ENCODE measurements at regions of chr17 and their contacts with region 1.

Region 1: DNA sequence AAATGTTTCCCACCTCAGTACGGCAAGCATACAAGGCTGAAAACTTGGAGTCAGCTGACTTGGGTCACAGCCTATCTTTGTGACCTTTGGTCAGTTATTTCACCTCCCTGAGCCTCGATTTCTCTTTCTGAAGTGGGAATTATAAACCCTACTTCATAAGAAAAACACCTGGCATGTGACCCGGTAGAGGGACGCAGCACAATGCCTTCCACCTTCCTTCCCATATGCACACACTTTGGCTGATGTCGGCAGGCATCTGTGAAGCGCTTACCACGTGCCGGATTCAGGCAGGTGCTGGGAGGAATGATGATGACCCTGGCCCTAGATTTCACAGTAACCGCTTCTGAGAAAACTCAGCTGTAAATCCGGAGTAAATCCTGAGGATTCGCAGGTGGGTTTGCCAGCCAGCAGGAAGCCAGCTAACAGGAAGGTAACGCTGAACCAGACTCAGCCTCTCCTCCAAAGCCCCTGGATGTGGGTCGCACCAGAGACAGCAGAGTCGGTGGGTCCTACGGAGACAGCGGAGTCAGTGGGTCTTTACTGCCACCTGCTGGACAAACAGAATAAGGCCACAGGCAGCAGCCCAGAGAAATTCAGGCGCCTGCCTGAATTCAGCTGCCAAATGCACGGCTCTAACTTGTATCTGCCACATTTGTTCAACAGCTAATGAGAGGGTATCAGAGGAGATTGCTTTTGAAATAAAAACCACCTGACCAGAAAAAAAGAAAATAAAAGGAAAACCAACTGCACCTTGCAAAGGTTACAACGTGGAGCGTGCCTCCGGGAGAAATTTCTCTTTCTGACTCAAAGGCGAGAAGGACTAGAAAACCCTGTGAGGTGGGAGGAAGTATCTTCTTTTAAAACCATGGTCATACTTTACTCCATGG is 16.6 kb downstream of the COPRS start:
- DNase-seq: peak; percentile 39 to 84 (median 50)
- ATAC-seq: peak; percentile 92
- H3K4me3 ChIP-seq: no peak overlapping the region
- H3K4me3 Mint-ChIP-seq: no peak overlapping the region
- H3K27ac ChIP-seq: no peak overlapping the region
- H3K27ac Mint-ChIP-seq: no peak overlapping the region
- H3K4me1 ChIP-seq: peaks cover 9% of the 10 kb centered on the region
- H3K4me1 Mint-ChIP-seq: no peaks in the 10 kb centered on the region
- H3K27me3 ChIP-seq: peaks cover 7 to 11% of the 10 kb centered on the region in 2 experiments
- H3K27me3 Mint-ChIP-seq: peaks cover 5% of the 10 kb centered on the region
- CTCF ChIP-seq: peak; percentile 91

Region 2: GRCh38 chr17:31388770-31389661 is 453.4 kb before region 1 on chr17:
- CTCF ChIA-PET with region 1: interaction called, 3 read pairs
- POLR2A ChIA-PET with region 1: no interaction called
- intact Hi-C with region 1: loop called (anchors 1 to 2 kb)
- DNase-seq: peak in 12 of 14 experiments; percentile 13 to 68 (median 42)
- ATAC-seq: peak; percentile 48
- H3K4me3 ChIP-seq: no peak overlapping the region
- H3K4me3 Mint-ChIP-seq: no peak overlapping the region
- H3K27ac ChIP-seq: no peak overlapping the region
- H3K27ac Mint-ChIP-seq: no peak overlapping the region
- H3K4me1 ChIP-seq: peaks cover 16% of the 10 kb centered on the region
- H3K4me1 Mint-ChIP-seq: peaks cover 6% of the 10 kb centered on the region
- H3K27me3 ChIP-seq: peaks cover 25 to 28% of the 10 kb centered on the region in 2 experiments
- H3K27me3 Mint-ChIP-seq: peaks cover 39% of the 10 kb centered on the region
- CTCF ChIP-seq: peak; percentile 65

Region 3: DNA sequence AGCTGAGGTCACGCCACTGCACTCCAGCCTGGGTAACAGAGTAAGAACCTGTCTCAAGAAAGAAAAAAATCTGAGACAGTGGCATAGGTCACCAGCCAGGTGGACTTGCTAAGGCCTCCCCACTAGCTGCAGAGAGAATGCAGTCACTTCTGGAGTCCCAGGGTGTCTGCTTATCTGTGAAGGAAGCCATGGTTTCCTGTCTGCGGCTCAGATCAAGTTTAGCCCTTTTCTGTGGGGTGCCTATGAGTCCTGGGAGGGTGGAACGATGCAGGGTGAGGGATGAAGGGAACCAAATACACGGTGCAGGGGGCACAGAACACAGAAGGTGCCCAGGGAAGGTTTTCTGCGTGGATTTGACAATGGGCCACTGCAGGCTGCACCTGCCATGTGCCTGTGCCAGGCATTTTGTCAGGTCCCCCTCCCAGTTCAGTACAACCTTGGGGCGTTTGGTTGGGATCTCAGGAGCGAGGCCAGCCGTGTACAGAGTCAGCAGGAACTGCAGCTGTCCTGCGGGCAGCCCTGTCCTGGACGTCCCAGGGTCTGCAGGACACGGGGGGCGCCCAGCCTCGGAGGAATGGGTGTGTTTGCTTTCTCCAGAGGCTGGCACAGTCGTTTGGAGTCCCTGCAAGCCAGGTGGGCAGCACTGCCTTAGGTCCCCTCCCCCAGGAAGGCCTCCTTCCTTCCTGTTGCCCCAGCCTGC is 409.2 kb before region 1 on chr17:
- CTCF ChIA-PET with region 1: interaction called, 6 read pairs
- POLR2A ChIA-PET with region 1: no interaction called
- intact Hi-C with region 1: loop called (anchors 1 kb)
- DNase-seq: peak; percentile 19 to 76 (median 34)
- ATAC-seq: peak; percentile 92
- H3K4me3 ChIP-seq: no peak overlapping the region
- H3K4me3 Mint-ChIP-seq: peak overlapping the region; percentile 3
- H3K27ac ChIP-seq: no peak overlapping the region
- H3K27ac Mint-ChIP-seq: peak overlapping the region; percentile 11
- H3K4me1 ChIP-seq: peaks cover 30% of the 10 kb centered on the region
- H3K4me1 Mint-ChIP-seq: peaks cover 13% of the 10 kb centered on the region
- H3K27me3 ChIP-seq: peaks cover 0 to 5% of the 10 kb centered on the region in 2 experiments
- H3K27me3 Mint-ChIP-seq: peaks cover 11% of the 10 kb centered on the region
- CTCF ChIP-seq: no peak

Region 4: DNA sequence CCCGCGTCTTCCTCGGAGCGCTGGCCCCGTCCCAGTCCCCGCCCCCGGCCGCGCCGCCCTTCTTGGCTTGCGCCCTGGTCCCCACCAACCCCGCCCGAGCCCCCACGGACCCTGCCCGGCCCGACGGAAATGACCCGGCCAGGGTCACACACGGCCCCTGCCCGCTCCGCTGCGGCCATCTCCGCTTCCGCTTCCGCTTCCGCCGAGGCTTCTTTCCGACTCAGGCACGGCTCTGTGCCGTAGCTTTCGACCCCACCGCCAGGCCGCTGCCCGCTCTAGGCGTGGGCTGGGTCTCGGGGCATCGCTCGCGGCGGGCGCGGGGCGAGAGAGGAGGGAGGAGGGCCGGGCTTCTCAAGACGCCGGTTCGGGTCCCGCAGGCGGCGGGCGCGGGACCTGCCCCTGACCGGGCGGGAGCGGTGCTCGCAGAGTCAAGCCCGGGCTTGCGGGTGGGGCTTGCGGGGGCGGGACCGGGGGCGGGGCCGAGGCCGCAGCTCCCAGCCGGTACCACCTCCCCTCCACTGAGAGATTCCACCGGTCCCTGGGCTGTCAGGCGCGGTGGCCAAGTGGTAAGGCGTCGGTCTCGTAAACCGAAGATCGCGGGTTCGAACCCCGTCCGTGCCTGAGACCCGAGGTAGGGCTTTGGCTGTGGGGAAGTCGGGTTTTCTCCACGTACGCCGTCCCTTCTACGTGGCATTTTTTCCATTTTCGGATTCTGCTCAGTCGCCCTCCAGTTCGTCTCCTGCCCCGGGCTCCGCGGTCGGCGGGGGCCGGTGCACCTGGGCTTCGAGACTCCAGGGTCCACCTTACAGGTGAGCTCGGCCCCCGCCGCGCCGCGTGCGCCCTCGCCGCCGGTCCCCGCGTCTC is 292.7 kb before region 1 on chr17:
- CTCF ChIA-PET with region 1: no interaction called
- POLR2A ChIA-PET with region 1: no interaction called
- intact Hi-C with region 1: loop called in 1 of 2 experiments (anchors 10 kb)
- DNase-seq: peak; percentile 78 to 93 (median 87)
- ATAC-seq: peak; percentile 87
- H3K4me3 ChIP-seq: peak overlapping the region; percentile 74
- H3K4me3 Mint-ChIP-seq: peak overlapping the region; percentile 96
- H3K27ac ChIP-seq: peak overlapping the region in 1 of 2 donors; percentile 56
- H3K27ac Mint-ChIP-seq: peak overlapping the region; percentile 76
- H3K4me1 ChIP-seq: peaks cover 15% of the 10 kb centered on the region
- H3K4me1 Mint-ChIP-seq: peaks cover 23% of the 10 kb centered on the region
- H3K27me3 ChIP-seq: no peaks in the 10 kb centered on the region
- H3K27me3 Mint-ChIP-seq: no peaks in the 10 kb centered on the region
- CTCF ChIP-seq: no peak

Region 5: GRCh38 chr17:31558748-31559644 is 283.4 kb before region 1 on chr17:
- CTCF ChIA-PET with region 1: no interaction called
- POLR2A ChIA-PET with region 1: no interaction called
- intact Hi-C with region 1: loop called (anchors 5 to 10 kb)
- DNase-seq: peak in 13 of 14 experiments; percentile 22 to 77 (median 50)
- ATAC-seq: peak; percentile 88
- H3K4me3 ChIP-seq: peak overlapping the region; percentile 45
- H3K4me3 Mint-ChIP-seq: peak overlapping the region; percentile 76
- H3K27ac ChIP-seq: no peak overlapping the region
- H3K27ac Mint-ChIP-seq: no peak overlapping the region
- H3K4me1 ChIP-seq: peaks cover 15% of the 10 kb centered on the region
- H3K4me1 Mint-ChIP-seq: peaks cover 16% of the 10 kb centered on the region
- H3K27me3 ChIP-seq: peaks cover 0 to 5% of the 10 kb centered on the region in 2 experiments
- H3K27me3 Mint-ChIP-seq: peaks cover 4% of the 10 kb centered on the region
- CTCF ChIP-seq: peak; percentile 45